CD4-positive, alpha-beta T cell (primary cell): ENCODE measurements at regions of chr11 and their contacts with region 1.

Region 1: GRCh38 chr11:57823859-57824258 is 62.3 kb downstream of the CTNND1 start:
- DNase-seq: no peak
- ATAC-seq: no peak
- H3K4me3 ChIP-seq: no peak overlapping the region
- H3K4me3 Mint-ChIP-seq: no peak overlapping the region
- H3K27ac ChIP-seq: no peak overlapping the region
- H3K27ac Mint-ChIP-seq: no peak overlapping the region
- H3K4me1 ChIP-seq: no peaks in the 10 kb centered on the region
- H3K4me1 Mint-ChIP-seq: no peaks in the 10 kb centered on the region
- H3K27me3 ChIP-seq: no peaks in the 10 kb centered on the region
- H3K27me3 Mint-ChIP-seq: peaks cover 7% of the 10 kb centered on the region
- CTCF ChIP-seq: no peak

Region 2: DNA sequence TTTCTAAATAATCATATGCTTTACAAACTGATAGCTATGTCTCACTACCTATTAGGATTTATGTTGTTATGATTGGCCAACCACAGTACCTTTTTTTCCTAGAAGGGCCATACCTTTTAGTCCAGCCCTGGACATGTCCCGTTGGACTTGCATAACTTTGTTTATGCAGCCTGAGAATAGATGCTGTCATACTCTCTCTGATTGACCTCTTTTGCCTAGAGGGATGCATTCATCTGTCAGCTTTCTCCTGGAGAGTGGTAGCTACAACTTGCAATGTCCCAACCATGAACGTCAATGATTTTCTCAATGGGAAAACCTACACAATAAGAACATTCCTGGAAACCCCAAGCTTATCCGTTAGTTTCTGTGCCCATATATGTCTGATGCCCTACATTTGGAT is 288.5 kb after region 1 on chr11:
- CTCF ChIA-PET with region 1: no interaction called
- POLR2A ChIA-PET with region 1: no interaction called
- intact Hi-C with region 1: no loop called
- DNase-seq: no peak
- ATAC-seq: no peak
- H3K4me3 ChIP-seq: no peak overlapping the region
- H3K4me3 Mint-ChIP-seq: no peak overlapping the region
- H3K27ac ChIP-seq: no peak overlapping the region
- H3K27ac Mint-ChIP-seq: no peak overlapping the region
- H3K4me1 ChIP-seq: no peaks in the 10 kb centered on the region
- H3K4me1 Mint-ChIP-seq: no peaks in the 10 kb centered on the region
- H3K27me3 ChIP-seq: peaks cover 0 to 3% of the 10 kb centered on the region in 2 experiments
- H3K27me3 Mint-ChIP-seq: peaks cover 48% of the 10 kb centered on the region
- CTCF ChIP-seq: no peak

Region 3: GRCh38 chr11:58192229-58192628 is 368.4 kb after region 1 on chr11:
- CTCF ChIA-PET with region 1: no interaction called
- POLR2A ChIA-PET with region 1: no interaction called
- intact Hi-C with region 1: no loop called
- DNase-seq: no peak
- ATAC-seq: no peak
- H3K4me3 ChIP-seq: no peak overlapping the region
- H3K4me3 Mint-ChIP-seq: no peak overlapping the region
- H3K27ac ChIP-seq: no peak overlapping the region
- H3K27ac Mint-ChIP-seq: no peak overlapping the region
- H3K4me1 ChIP-seq: no peaks in the 10 kb centered on the region
- H3K4me1 Mint-ChIP-seq: no peaks in the 10 kb centered on the region
- H3K27me3 ChIP-seq: peaks cover 0 to 4% of the 10 kb centered on the region in 2 experiments
- H3K27me3 Mint-ChIP-seq: no peaks in the 10 kb centered on the region
- CTCF ChIP-seq: no peak

Region 4: GRCh38 chr11:58513747-58514367 is 690.0 kb after region 1 on chr11:
- CTCF ChIA-PET with region 1: no interaction called
- POLR2A ChIA-PET with region 1: no interaction called
- intact Hi-C with region 1: loop called in 1 of 2 experiments (anchors 5 kb)
- DNase-seq: peak in 3 of 14 experiments; percentile 15 to 42 (median 38)
- ATAC-seq: no peak
- H3K4me3 ChIP-seq: no peak overlapping the region
- H3K4me3 Mint-ChIP-seq: no peak overlapping the region
- H3K27ac ChIP-seq: no peak overlapping the region
- H3K27ac Mint-ChIP-seq: no peak overlapping the region
- H3K4me1 ChIP-seq: no peaks in the 10 kb centered on the region
- H3K4me1 Mint-ChIP-seq: peaks cover 4% of the 10 kb centered on the region
- H3K27me3 ChIP-seq: no peaks in the 10 kb centered on the region
- H3K27me3 Mint-ChIP-seq: no peaks in the 10 kb centered on the region
- CTCF ChIP-seq: peak; percentile 28